ENCODE measurements at regions of chr7 and their contacts with region 1.

Region 1: DNA sequence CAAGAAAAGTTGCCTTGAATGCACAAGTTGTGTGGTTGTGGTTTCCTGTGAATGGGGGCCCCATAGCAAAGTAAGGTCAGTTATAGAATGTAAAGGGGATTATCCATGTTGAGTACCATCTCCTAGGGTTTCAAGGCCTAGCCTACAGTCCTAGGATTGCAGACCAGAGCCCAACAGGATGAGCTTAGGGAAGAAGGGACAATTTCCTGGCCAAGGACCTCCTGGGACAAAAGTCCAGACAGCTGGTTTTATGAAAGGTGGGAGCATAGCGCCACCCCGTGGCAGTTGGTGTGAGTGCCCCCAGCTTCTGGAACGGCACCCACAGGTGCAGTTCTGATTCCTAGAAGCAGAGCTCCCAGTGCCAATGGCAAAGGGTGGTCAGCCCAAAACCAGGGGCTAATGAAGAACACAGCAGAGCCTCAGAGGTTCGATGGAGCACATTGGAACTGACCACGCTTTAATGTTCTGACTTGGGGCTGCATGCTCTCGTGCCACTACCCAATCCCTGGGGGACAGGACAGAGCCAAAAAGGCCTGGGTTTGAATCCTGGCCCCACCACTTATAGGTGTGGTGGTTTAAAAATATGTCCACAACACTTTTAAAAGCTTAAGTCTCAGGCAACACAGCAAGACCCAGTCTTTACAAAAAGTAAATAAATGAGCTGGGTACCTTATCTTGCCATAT is 25.8 kb upstream of the TMEM120A start:
- DNase-seq: peak; percentile 82
- ATAC-seq: peak; percentile 81
- H3K4me3 ChIP-seq: no peak overlapping the region
- H3K27ac ChIP-seq: no peak overlapping the region
- H3K4me1 ChIP-seq: peaks cover 11% of the 10 kb centered on the region
- H3K27me3 ChIP-seq: no peaks in the 10 kb centered on the region
- CTCF ChIP-seq: peak; percentile 91

Region 2: DNA sequence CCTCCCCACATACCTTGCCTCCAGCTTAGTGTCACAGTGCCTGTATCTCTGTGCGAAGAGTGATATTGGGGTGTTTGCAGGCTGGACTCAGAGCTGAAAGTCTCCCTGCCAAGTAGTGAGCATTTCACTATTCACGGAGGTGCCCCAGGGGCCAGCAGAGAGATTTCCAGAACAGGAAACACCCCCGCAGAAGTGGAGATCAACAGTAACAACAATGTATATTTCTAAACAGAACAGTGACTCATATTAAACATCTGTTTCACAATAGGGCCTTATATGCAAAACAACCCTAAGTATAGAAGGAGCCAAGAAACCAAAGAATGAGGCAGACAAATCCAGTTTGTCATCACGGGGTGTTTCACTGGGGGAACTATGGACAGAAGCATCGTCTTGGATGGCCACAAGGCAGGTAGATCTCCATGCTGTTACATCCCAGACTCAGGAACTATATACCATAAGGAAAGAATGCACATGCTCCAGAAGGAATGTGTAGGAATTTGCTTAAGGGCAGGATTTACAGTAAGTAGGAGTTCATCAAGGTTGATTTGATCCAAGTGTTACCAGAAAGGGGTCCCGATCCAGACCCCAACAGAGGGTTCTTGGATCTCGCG is 177.2 kb before region 1 on chr7:
- intact Hi-C with region 1: no loop called
- DNase-seq: no peak
- ATAC-seq: peak; percentile 86 to 88
- H3K4me3 ChIP-seq: peak overlapping the region; percentile 27
- H3K27ac ChIP-seq: peak overlapping the region; percentile 44
- H3K4me1 ChIP-seq: peaks cover 21% of the 10 kb centered on the region
- H3K27me3 ChIP-seq: no peaks in the 10 kb centered on the region
- CTCF ChIP-seq: no peak

Region 3: DNA sequence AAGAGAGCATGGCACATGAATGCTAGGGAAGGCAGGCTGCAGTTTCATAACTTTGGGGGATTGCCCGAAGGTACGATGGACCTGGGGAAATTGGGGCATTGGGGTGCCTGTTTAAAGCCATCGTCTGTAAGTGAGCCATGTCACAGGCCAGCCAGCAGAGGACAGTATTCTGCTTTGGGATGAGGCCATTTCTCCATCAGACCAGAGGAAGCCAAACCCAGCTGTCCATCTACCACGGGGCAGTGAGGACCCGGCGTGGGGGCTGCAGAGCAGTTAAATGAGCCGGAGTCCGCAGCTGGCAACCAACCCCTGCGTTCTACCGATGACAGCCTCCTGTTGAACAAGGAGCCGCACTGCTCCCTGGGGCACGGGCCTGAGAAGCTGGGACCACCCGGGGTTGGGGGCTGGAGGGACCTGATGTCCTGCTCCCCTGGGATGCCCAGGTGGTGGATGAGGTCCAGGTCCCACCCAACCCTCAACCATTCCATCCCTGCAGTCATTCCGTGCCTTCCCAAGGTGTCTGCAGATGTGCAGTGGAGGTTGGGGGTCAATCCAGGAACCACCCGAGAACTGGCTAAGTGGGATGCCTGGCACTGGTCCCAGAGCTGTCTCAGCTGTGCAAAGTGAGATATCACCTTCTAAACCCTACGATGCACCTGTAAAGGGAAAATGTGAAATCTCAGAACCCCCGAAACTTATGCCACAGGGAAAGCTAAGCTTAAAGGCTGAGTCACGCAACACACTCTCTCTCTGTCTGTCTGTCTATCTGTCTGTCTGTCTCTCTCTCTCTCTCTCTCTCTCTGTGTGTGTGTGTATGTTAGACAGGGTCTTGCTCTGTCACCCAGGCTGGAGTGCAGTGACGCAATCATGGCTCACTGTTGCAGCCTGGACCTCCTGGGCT is 153.4 kb before region 1 on chr7:
- intact Hi-C with region 1: loop called (anchors 10 kb)
- DNase-seq: peak; percentile 71
- ATAC-seq: peak; percentile 93
- H3K4me3 ChIP-seq: no peak overlapping the region
- H3K27ac ChIP-seq: no peak overlapping the region
- H3K4me1 ChIP-seq: peaks cover 11% of the 10 kb centered on the region
- H3K27me3 ChIP-seq: no peaks in the 10 kb centered on the region
- CTCF ChIP-seq: peak; percentile 88

Region 4: GRCh38 chr7:76106893-76107292 is 86.7 kb after region 1 on chr7:
- intact Hi-C with region 1: no loop called
- DNase-seq: no peak
- ATAC-seq: no peak
- H3K4me3 ChIP-seq: no peak overlapping the region
- H3K27ac ChIP-seq: no peak overlapping the region
- H3K4me1 ChIP-seq: no peaks in the 10 kb centered on the region
- H3K27me3 ChIP-seq: no peaks in the 10 kb centered on the region
- CTCF ChIP-seq: no peak

Region 5: GRCh38 chr7:76133164-76133775 is 113.1 kb after region 1 on chr7:
- intact Hi-C with region 1: no loop called
- DNase-seq: no peak
- ATAC-seq: no peak
- H3K4me3 ChIP-seq: no peak overlapping the region
- H3K27ac ChIP-seq: no peak overlapping the region
- H3K4me1 ChIP-seq: no peaks in the 10 kb centered on the region
- H3K27me3 ChIP-seq: no peaks in the 10 kb centered on the region
- CTCF ChIP-seq: no peak

Measured in lower lobe of right lung (tissue), 2 donors.